Naive thymus-derived CD4-positive, alpha-beta T cell (primary cell): ENCODE measurements at regions of chr11 and their contacts with region 1.

Region 1: GRCh38 chr11:57567515-57568329 is at the start of gene UBE2L6:
- DNase-seq: peak; percentile 51 to 74 (median 67)
- ATAC-seq: peak; percentile 90
- H3K4me3 ChIP-seq: peak within 1 kb of the TSS; percentile 99
- H3K4me3 Mint-ChIP-seq: peak within 1 kb of the TSS; percentile 92 to 100 (median 99)
- H3K27ac ChIP-seq: peak within 1 kb of the TSS; percentile 97
- H3K27ac Mint-ChIP-seq: peak within 1 kb of the TSS; percentile 95 to 100 (median 98)
- H3K4me1 ChIP-seq: peaks cover 9 to 17% of the 10 kb centered on the region in 2 donors
- H3K4me1 Mint-ChIP-seq: peaks cover 37 to 65% (median 50%) of the 10 kb centered on the region in 7 donors
- H3K27me3 ChIP-seq: no peaks in the 10 kb centered on the region
- H3K27me3 Mint-ChIP-seq: no peaks in the 10 kb centered on the region
- total RNA-seq, gene UBE2L6: 51.1 to 326 (median 64.2) TPM

Region 2: GRCh38 chr11:57324886-57325734 is 242.6 kb before region 1 on chr11 and contains the start of gene TNKS1BP1:
- CTCF ChIA-PET with region 1: no interaction called
- POLR2A ChIA-PET with region 1: no interaction called
- intact Hi-C with region 1: loop called in 1 of 2 experiments (anchors 10 kb)
- DNase-seq: peak; percentile 84 to 92 (median 90)
- ATAC-seq: peak; percentile 91
- H3K4me3 ChIP-seq: peak within 1 kb of the TSS; percentile 73
- H3K4me3 Mint-ChIP-seq: peak within 1 kb of the TSS; percentile 88 to 95 (median 91)
- H3K27ac ChIP-seq: peak within 1 kb of the TSS; percentile 79
- H3K27ac Mint-ChIP-seq: peak within 1 kb of the TSS; percentile 93 to 98 (median 95)
- H3K4me1 ChIP-seq: peaks cover 8 to 14% of the 10 kb centered on the region in 2 donors
- H3K4me1 Mint-ChIP-seq: peaks cover 30 to 58% (median 51%) of the 10 kb centered on the region in 7 donors
- H3K27me3 ChIP-seq: no peaks in the 10 kb centered on the region
- H3K27me3 Mint-ChIP-seq: no peaks in the 10 kb centered on the region
- total RNA-seq, gene TNKS1BP1: 11.2 to 22.0 (median 15.9) TPM

Region 3: GRCh38 chr11:57463671-57464538 is 103.8 kb before region 1 on chr11:
- CTCF ChIA-PET with region 1: no interaction called
- POLR2A ChIA-PET with region 1: no interaction called
- intact Hi-C with region 1: no loop called
- DNase-seq: no peak
- ATAC-seq: no peak
- H3K4me3 ChIP-seq: no peak overlapping the region
- H3K4me3 Mint-ChIP-seq: no peak overlapping the region
- H3K27ac ChIP-seq: no peak overlapping the region
- H3K27ac Mint-ChIP-seq: peak overlapping the region in 1 of 9 donors; percentile 36
- H3K4me1 ChIP-seq: peaks cover 12 to 13% of the 10 kb centered on the region in 2 donors
- H3K4me1 Mint-ChIP-seq: peaks cover 8 to 22% (median 17%) of the 10 kb centered on the region in 7 donors
- H3K27me3 ChIP-seq: peaks cover 7 to 8% of the 10 kb centered on the region in 2 donors
- H3K27me3 Mint-ChIP-seq: peaks cover 11 to 48% (median 16%) of the 10 kb centered on the region in 5 donors

Region 4: DNA sequence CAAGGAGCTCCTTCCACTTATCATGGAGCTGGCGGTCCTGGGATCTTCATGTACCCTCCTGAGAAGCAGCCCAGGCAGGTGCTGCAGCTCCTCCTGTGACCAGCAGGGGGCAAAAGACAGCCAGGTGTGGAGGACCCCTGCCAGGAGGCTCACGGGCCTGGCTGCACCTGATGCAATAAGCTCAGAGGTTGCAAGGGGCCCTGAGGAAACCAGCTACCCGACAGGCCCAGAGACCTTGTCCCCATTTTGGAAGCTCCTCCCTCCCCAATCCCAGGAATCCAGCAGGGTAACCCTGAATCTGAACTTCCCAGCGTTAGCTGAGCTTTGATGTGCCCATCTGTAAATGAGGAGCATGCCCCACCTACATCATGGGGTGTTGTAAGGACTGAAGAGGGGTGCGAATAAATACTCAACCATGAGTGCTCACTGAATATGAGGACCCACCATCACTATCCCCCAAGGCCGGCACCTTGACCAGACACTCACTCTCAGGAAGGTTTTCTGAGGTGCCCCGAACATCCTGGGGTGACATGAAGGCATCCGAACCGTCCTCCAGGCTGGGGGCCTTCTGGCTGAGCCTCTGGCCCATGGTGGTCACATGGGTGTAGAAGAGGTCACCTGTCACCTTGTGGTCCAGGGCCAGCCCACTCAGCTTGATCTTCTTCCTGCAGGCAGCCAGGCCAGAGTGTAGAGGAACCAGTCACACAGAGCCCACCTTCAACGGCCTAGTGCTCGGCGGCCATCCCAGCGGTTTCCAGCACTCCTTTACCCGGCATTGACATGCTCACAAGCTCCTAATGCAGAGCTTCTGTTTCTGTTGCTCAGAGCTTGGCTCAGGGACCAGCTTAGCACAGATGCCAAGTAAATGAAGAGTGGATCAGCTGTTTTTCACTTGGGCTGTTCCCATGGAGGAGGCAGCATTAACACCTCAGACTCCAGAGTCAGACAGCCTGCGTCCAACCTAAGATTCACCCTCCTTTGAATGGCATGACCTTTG is 73.9 kb before region 1 on chr11:
- CTCF ChIA-PET with region 1: interaction called, 6 read pairs
- POLR2A ChIA-PET with region 1: no interaction called
- intact Hi-C with region 1: loop called in 1 of 2 experiments (anchors 5 kb)
- DNase-seq: peak; percentile 51 to 77 (median 67)
- ATAC-seq: peak; percentile 89
- H3K4me3 ChIP-seq: no peak overlapping the region
- H3K4me3 Mint-ChIP-seq: no peak overlapping the region
- H3K27ac ChIP-seq: no peak overlapping the region
- H3K27ac Mint-ChIP-seq: peak overlapping the region in 1 of 9 donors; percentile 5
- H3K4me1 ChIP-seq: peaks cover 0 to 3% of the 10 kb centered on the region in 2 donors
- H3K4me1 Mint-ChIP-seq: peaks cover 0 to 11% (median 0%) of the 10 kb centered on the region in 7 donors
- H3K27me3 ChIP-seq: no peaks in the 10 kb centered on the region
- H3K27me3 Mint-ChIP-seq: peaks cover 0 to 3% (median 0%) of the 10 kb centered on the region in 5 donors

Region 5: DNA sequence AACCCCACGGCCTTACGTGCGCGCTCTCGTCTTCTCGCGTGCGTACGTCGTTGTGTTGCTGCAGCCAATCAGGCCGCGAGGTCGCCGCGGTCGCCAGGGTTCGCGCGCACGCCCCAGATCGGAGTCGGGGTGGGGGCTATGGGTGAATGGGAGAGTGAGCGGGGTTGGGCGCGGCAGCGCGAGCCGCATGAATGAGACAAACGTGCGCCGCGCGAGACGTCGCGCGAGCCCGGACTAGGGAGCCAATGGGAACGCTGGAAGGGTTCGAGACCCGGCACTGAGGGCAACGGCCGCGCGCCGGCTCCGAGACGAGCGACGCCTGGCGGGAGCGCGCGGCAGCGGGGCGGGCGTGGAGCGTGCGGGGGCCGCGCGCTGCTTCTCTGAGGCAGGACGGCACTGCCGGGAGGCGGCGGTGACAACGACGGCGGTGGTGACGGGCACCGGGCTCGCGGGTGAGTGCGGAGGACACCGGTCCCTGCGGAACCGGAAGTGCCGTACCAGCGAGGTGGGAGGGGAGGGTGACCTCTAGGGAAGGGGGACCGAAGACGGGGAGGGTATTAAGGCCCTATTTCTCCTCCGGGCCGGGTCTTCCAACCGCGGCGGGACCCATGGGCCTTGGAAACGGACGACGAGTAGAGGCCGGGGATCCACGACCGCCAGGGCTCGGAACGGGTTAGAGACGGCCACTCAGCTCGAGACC is 100.2 kb after region 1 on chr11 and contains the start of gene ZDHHC5:
- CTCF ChIA-PET with region 1: interaction called, 3 read pairs
- POLR2A ChIA-PET with region 1: no interaction called
- intact Hi-C with region 1: loop called (anchors 1 kb)
- DNase-seq: peak; percentile 92 to 100 (median 100)
- ATAC-seq: peak; percentile 90
- H3K4me3 ChIP-seq: peak within 1 kb of the TSS; percentile 87
- H3K4me3 Mint-ChIP-seq: peak within 1 kb of the TSS; percentile 84 to 100 (median 91)
- H3K27ac ChIP-seq: peak within 1 kb of the TSS; percentile 97
- H3K27ac Mint-ChIP-seq: peak within 1 kb of the TSS; percentile 97 to 100 (median 98)
- H3K4me1 ChIP-seq: peaks cover 25 to 28% of the 10 kb centered on the region in 2 donors
- H3K4me1 Mint-ChIP-seq: peaks cover 35 to 62% (median 50%) of the 10 kb centered on the region in 7 donors
- H3K27me3 ChIP-seq: no peaks in the 10 kb centered on the region
- H3K27me3 Mint-ChIP-seq: no peaks in the 10 kb centered on the region
- total RNA-seq, gene ZDHHC5: 51.4 to 82.2 (median 59.1) TPM

Region 6: GRCh38 chr11:57792060-57792541 is 224.4 kb after region 1 on chr11:
- CTCF ChIA-PET with region 1: no interaction called
- POLR2A ChIA-PET with region 1: no interaction called
- intact Hi-C with region 1: loop called (anchors 2 kb)
- DNase-seq: peak; percentile 69 to 93 (median 90)
- ATAC-seq: peak; percentile 96
- H3K4me3 ChIP-seq: peak overlapping the region; percentile 15
- H3K4me3 Mint-ChIP-seq: peak overlapping the region; percentile 55 to 88 (median 77)
- H3K27ac ChIP-seq: peak overlapping the region; percentile 83
- H3K27ac Mint-ChIP-seq: peak overlapping the region; percentile 90 to 99 (median 99)
- H3K4me1 ChIP-seq: peaks cover 21 to 29% of the 10 kb centered on the region in 2 donors
- H3K4me1 Mint-ChIP-seq: peaks cover 37 to 53% (median 44%) of the 10 kb centered on the region in 7 donors
- H3K27me3 ChIP-seq: no peaks in the 10 kb centered on the region
- H3K27me3 Mint-ChIP-seq: peaks cover 0 to 2% (median 0%) of the 10 kb centered on the region in 5 donors

Region 7: GRCh38 chr11:58513747-58514367 is 946.1 kb after region 1 on chr11:
- CTCF ChIA-PET with region 1: no interaction called
- POLR2A ChIA-PET with region 1: no interaction called
- intact Hi-C with region 1: loop called in 1 of 2 experiments (anchors 1 kb)
- DNase-seq: peak in 3 of 9 donors; percentile 17 to 29 (median 20)
- ATAC-seq: peak; percentile 40
- H3K4me3 ChIP-seq: no peak overlapping the region
- H3K4me3 Mint-ChIP-seq: no peak overlapping the region
- H3K27ac ChIP-seq: no peak overlapping the region
- H3K27ac Mint-ChIP-seq: peak overlapping the region in 2 of 9 donors; percentile 19 to 63
- H3K4me1 ChIP-seq: no peaks in the 10 kb centered on the region
- H3K4me1 Mint-ChIP-seq: peaks cover 0 to 14% (median 0%) of the 10 kb centered on the region in 7 donors
- H3K27me3 ChIP-seq: no peaks in the 10 kb centered on the region
- H3K27me3 Mint-ChIP-seq: no peaks in the 10 kb centered on the region